Activated CD4-positive, alpha-beta T cell treated with anti-CD3 and anti-CD28 coated beads, Interleukin-2, amount 10 ng/mL, durations not matched to agents 24 days and 14 days (primary cell): ENCODE measurements at regions of chr11 and their contacts with region 1.

Region 1: GRCh38 chr11:72222907-72223614 is 1.5 kb upstream of the INPPL1 start:
- DNase-seq: peak; percentile 99
- H3K4me3 Mint-ChIP-seq: peak overlapping the region; percentile 98
- H3K27ac Mint-ChIP-seq: peak overlapping the region; percentile 87
- H3K4me1 Mint-ChIP-seq: peaks cover 20% of the 10 kb centered on the region
- H3K27me3 Mint-ChIP-seq: peaks cover 8% of the 10 kb centered on the region

Region 2: DNA sequence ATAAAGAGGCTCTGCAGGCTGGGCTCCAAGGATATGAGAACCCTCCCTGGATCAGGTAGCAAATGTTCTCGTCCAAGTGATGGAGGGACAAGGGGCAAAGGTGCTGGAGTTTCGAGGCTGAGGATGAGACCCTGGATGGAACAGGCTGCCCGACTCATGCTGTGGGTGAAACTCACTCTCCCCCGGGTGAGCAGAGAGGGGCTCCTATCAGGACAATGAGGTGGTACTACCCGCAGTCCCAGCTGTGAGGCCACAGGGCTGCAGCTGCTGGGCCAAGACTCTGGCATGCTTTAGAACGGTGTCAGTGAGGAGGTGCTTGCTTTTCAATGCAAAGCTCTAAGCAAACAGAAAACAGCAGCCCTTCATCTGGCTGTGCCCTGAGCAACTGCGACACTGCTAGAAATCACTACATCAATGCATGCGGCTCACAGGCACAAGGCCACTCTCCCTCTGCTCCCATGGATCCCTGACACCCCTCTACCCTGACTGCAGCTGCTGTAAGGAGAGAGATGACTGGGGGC is 1039.8 kb before region 1 on chr11:
- intact Hi-C with region 1: no loop called
- DNase-seq: no peak
- H3K4me3 Mint-ChIP-seq: no peak overlapping the region
- H3K27ac Mint-ChIP-seq: no peak overlapping the region
- H3K4me1 Mint-ChIP-seq: no peaks in the 10 kb centered on the region
- H3K27me3 Mint-ChIP-seq: peaks cover 12% of the 10 kb centered on the region

Region 3: GRCh38 chr11:72030472-72031045 is 192.5 kb before region 1 on chr11:
- intact Hi-C with region 1: loop called (anchors 1 kb)
- DNase-seq: no peak
- H3K4me3 Mint-ChIP-seq: no peak overlapping the region
- H3K27ac Mint-ChIP-seq: no peak overlapping the region
- H3K4me1 Mint-ChIP-seq: peaks cover 19% of the 10 kb centered on the region
- H3K27me3 Mint-ChIP-seq: no peaks in the 10 kb centered on the region

Region 4: GRCh38 chr11:72040726-72041441 is 182.2 kb before region 1 on chr11:
- intact Hi-C with region 1: loop called (anchors 1 kb)
- DNase-seq: peak; percentile 90
- H3K4me3 Mint-ChIP-seq: no peak overlapping the region
- H3K27ac Mint-ChIP-seq: no peak overlapping the region
- H3K4me1 Mint-ChIP-seq: peaks cover 37% of the 10 kb centered on the region
- H3K27me3 Mint-ChIP-seq: no peaks in the 10 kb centered on the region

Region 5: GRCh38 chr11:72080256-72080974 is 142.6 kb before region 1 on chr11 and contains the starts of genes LRRC51 and NUMA1:
- intact Hi-C with region 1: loop called (anchors 1 kb)
- DNase-seq: peak; percentile 100
- H3K4me3 Mint-ChIP-seq: peak within 1 kb of the TSS; percentile 96
- H3K27ac Mint-ChIP-seq: peak within 1 kb of the TSS; percentile 94
- H3K4me1 Mint-ChIP-seq: peaks cover 46% of the 10 kb centered on the region
- H3K27me3 Mint-ChIP-seq: no peaks in the 10 kb centered on the region
- total RNA-seq, gene LRRC51: 7.0 and 7.1 TPM in 2 replicates
- total RNA-seq, gene NUMA1: 138 and 149 TPM in 2 replicates

Region 6: DNA sequence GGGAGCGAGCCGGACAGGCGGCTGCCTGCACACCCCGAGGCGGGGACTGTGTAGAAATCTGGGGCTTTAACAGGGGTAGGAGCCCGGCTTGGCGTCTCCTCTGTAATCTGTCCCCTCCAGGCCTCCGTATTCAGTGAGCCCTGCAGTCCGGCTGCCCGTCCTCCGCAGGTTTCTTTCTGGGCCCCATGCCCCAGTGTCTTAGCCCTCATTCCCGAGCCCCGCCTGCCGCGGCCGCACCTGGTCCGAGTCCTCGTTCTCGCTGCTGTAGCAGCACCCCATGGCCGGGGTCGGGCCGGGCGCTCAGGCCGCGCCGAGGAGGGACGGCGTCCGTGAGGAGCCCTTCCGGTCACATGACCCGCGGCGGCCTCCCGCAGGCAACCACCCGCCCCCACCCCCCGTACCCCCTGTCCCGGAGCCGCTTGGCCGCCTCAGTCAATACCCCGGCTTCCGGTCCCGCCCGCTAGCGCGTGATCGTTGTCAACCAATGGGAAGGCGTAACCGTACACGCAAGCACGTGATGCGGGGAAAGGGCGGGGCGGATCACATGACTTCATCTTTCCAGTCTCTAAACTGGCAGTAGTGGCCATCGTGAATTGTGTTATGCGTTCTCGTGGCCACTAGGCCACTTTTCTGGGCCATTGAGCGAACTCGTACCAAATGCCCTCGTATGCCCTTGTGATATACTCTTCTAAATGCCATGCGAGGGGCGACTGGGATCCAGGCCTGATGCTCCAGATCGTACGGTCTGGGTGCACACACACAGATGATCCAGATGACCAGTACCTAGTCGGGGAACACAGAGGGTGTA is 119.9 kb before region 1 on chr11 and contains the start of gene LAMTOR1:
- intact Hi-C with region 1: loop called (anchors 1 kb)
- DNase-seq: peak; percentile 100
- H3K4me3 Mint-ChIP-seq: peak within 1 kb of the TSS; percentile 98
- H3K27ac Mint-ChIP-seq: peak within 1 kb of the TSS; percentile 94
- H3K4me1 Mint-ChIP-seq: peaks cover 38% of the 10 kb centered on the region
- H3K27me3 Mint-ChIP-seq: no peaks in the 10 kb centered on the region
- total RNA-seq, gene LAMTOR1: 78.6 and 81.4 TPM in 2 replicates

Region 7: GRCh38 chr11:72112321-72113219 is 110.5 kb before region 1 on chr11 and contains the start of gene ANAPC15:
- intact Hi-C with region 1: loop called (anchors 1 kb)
- DNase-seq: peak; percentile 100
- H3K4me3 Mint-ChIP-seq: peak within 1 kb of the TSS; percentile 98
- H3K27ac Mint-ChIP-seq: peak within 1 kb of the TSS; percentile 99
- H3K4me1 Mint-ChIP-seq: peaks cover 18% of the 10 kb centered on the region
- H3K27me3 Mint-ChIP-seq: no peaks in the 10 kb centered on the region
- total RNA-seq, gene ANAPC15: 52.1 and 54.9 TPM in 2 replicates

Region 8: GRCh38 chr11:72238040-72238450 is 15.0 kb after region 1 on chr11:
- intact Hi-C with region 1: loop called (anchors 2 kb)
- DNase-seq: peak; percentile 83
- H3K4me3 Mint-ChIP-seq: no peak overlapping the region
- H3K27ac Mint-ChIP-seq: no peak overlapping the region
- H3K4me1 Mint-ChIP-seq: peaks cover 10% of the 10 kb centered on the region
- H3K27me3 Mint-ChIP-seq: peaks cover 37% of the 10 kb centered on the region